CD14-positive monocyte (primary cell): ENCODE measurements at regions of chr11 and their contacts with region 1.

Region 1: GRCh38 chr11:72969894-72970335 is 155.7 kb downstream of the ATG16L2 start:
- DNase-seq: peak in 1 of 3 donors; percentile 42
- H3K4me3 ChIP-seq: no peak overlapping the region
- H3K4me3 Mint-ChIP-seq: no peak overlapping the region
- H3K27ac ChIP-seq: peak overlapping the region in 1 of 2 donors; percentile 44
- H3K27ac Mint-ChIP-seq: peak overlapping the region in 4 of 7 donors; percentile 46 to 54 (median 48)
- H3K4me1 ChIP-seq: peaks cover 36 to 48% of the 10 kb centered on the region in 2 donors
- H3K4me1 Mint-ChIP-seq: peaks cover 50% of the 10 kb centered on the region
- H3K27me3 ChIP-seq: no peaks in the 10 kb centered on the region
- H3K27me3 Mint-ChIP-seq: no peaks in the 10 kb centered on the region
- CTCF ChIP-seq: no peak

Region 2: DNA sequence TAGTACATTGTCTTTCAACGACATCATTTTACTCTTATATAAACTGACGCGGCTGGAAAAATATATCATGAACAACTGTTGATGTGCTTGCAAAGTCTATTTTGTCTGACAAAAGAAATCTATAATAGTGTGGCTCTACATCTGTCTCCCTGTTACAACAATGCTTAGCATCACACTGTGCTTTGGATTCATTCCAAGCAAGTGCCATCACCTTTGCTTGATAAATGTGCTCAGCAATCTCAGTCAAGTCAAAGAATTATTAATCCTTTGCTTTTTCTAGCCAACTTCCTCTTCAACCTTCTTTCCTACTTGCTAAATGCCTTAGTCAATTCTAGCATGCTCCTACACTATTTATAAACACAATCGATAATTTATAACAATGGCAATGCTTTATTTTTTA is 31.7 kb after region 1 on chr11:
- intact Hi-C with region 1: no loop called
- DNase-seq: no peak
- H3K4me3 ChIP-seq: no peak overlapping the region
- H3K4me3 Mint-ChIP-seq: no peak overlapping the region
- H3K27ac ChIP-seq: no peak overlapping the region
- H3K27ac Mint-ChIP-seq: no peak overlapping the region
- H3K4me1 ChIP-seq: peaks cover 6 to 15% of the 10 kb centered on the region in 2 donors
- H3K4me1 Mint-ChIP-seq: peaks cover 29% of the 10 kb centered on the region
- H3K27me3 ChIP-seq: no peaks in the 10 kb centered on the region
- H3K27me3 Mint-ChIP-seq: no peaks in the 10 kb centered on the region
- CTCF ChIP-seq: no peak

Region 3: GRCh38 chr11:73028611-73029010 is 58.7 kb after region 1 on chr11:
- intact Hi-C with region 1: loop called in 1 of 2 experiments (anchors 10 kb)
- DNase-seq: peak; percentile 78 to 91 (median 82)
- H3K4me3 ChIP-seq: peak overlapping the region in 1 of 3 experiments; percentile 34
- H3K4me3 Mint-ChIP-seq: peak overlapping the region in 1 of 2 donors; percentile 59
- H3K27ac ChIP-seq: peak overlapping the region; percentile 75
- H3K27ac Mint-ChIP-seq: peak overlapping the region; percentile 86 to 97 (median 91)
- H3K4me1 ChIP-seq: peaks cover 38% of the 10 kb centered on the region in 2 donors
- H3K4me1 Mint-ChIP-seq: peaks cover 35% of the 10 kb centered on the region
- H3K27me3 ChIP-seq: no peaks in the 10 kb centered on the region
- H3K27me3 Mint-ChIP-seq: no peaks in the 10 kb centered on the region
- CTCF ChIP-seq: no peak

Region 4: DNA sequence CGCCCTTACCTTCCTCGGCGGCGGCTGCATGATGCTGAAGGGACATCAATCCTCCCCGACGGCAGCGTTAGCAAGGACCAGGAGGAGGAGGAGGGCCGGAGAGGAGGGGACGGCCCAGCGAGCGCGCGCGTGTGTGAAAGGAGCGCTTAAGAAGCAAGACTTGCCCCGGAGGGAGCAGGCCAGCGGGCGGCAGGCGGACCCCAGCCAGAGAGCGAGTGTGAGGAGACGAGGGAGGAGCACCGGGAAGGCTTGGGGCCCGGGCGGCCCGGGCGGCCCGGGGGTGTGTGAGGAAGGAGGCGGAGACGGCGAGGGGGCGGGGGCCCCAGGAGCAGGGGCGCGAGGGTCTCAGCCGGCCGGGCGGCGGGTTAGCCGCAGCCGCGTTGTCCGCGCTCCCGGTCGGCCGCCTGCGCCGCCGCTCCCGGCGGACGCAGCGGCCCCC is 172.0 kb after region 1 on chr11:
- intact Hi-C with region 1: loop called in 1 of 2 experiments (anchors 5 kb)
- DNase-seq: peak; percentile 31 to 52 (median 49)
- H3K4me3 ChIP-seq: peak overlapping the region; percentile 83 to 98 (median 91)
- H3K4me3 Mint-ChIP-seq: peak overlapping the region; percentile 98 to 99
- H3K27ac ChIP-seq: peak overlapping the region; percentile 87 to 89
- H3K27ac Mint-ChIP-seq: peak overlapping the region; percentile 92 to 96 (median 94)
- H3K4me1 ChIP-seq: peaks cover 42 to 50% of the 10 kb centered on the region in 2 donors
- H3K4me1 Mint-ChIP-seq: peaks cover 46% of the 10 kb centered on the region
- H3K27me3 ChIP-seq: no peaks in the 10 kb centered on the region
- H3K27me3 Mint-ChIP-seq: no peaks in the 10 kb centered on the region
- CTCF ChIP-seq: no peak